Thyroid gland (tissue), 4 donors: ENCODE measurements at regions of chr15 and their contacts with region 1.

Region 1: DNA sequence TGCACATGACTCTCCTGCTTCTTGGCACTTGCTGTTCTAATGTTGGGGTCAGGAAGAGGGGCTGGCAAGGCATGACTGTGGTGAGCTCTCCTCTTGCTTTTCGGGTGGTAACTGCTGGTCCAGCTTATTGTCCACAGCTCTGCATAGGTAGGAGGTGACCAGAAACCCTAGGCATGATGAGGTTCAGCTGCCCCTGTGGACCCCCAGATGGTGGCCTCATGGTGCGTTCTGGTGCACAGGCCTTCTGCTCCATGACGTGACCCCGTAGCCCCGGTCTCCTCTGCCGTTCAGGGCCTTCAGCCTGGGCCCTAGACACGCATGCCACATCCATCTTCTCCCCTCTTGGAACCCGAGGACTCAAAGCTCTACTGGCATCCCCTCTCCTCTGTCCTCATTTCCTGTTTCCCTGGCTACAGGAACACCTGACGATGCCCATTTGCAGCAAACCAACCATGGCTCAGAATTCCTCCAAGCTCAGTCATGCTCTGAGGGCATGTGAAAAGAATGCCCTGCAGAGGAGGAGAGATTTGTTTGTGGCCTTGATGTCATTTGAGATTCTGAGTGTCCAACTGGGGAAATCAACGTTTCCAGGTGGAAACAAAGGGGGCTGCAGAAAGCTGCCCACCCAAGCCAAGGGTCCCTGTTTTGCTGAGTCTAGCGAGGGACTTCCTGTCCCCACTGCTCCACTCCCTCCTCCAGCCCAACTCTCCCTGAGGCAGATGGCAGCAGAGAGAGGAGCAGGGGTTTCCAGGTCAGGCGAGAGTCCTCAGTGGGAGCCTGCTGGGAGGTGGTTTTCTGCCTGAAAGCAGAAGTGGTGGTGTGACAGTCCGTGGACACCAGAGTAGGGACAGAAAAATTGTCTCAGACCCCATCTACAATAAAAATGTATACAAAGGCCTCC is 198.7 kb upstream of the LYSMD4 start:
- DNase-seq: no peak
- H3K4me3 ChIP-seq: no peak overlapping the region
- H3K27ac ChIP-seq: no peak overlapping the region
- H3K4me1 ChIP-seq: peaks cover 4 to 6% of the 10 kb centered on the region in 2 donors
- H3K27me3 ChIP-seq: no peaks in the 10 kb centered on the region
- CTCF ChIP-seq: no peak
- POLR2A ChIP-seq: no peak

Region 2: GRCh38 chr15:100341662-100342560 is 410.0 kb after region 1 on chr15 and contains the start of gene ADAMTS17:
- intact Hi-C with region 1: loop called (anchors 5 kb)
- DNase-seq: peak; percentile 97
- H3K4me3 ChIP-seq: peak within 1 kb of the TSS in 2 of 3 donors; percentile 6 to 63
- H3K27ac ChIP-seq: peak within 1 kb of the TSS in 1 of 3 donors; percentile 41
- H3K4me1 ChIP-seq: peaks cover 0 to 6% of the 10 kb centered on the region in 2 donors
- H3K27me3 ChIP-seq: no peaks in the 10 kb centered on the region
- CTCF ChIP-seq: peak; percentile 79 to 97 (median 90)
- POLR2A ChIP-seq: peak in 1 of 2 donors; percentile 89
- total RNA-seq, gene ADAMTS17: 3.5 to 667 (median 5.3) TPM